Mammary epithelial cell (primary cell): ENCODE measurements at regions of chr20 and their contacts with region 1.

Region 1: DNA sequence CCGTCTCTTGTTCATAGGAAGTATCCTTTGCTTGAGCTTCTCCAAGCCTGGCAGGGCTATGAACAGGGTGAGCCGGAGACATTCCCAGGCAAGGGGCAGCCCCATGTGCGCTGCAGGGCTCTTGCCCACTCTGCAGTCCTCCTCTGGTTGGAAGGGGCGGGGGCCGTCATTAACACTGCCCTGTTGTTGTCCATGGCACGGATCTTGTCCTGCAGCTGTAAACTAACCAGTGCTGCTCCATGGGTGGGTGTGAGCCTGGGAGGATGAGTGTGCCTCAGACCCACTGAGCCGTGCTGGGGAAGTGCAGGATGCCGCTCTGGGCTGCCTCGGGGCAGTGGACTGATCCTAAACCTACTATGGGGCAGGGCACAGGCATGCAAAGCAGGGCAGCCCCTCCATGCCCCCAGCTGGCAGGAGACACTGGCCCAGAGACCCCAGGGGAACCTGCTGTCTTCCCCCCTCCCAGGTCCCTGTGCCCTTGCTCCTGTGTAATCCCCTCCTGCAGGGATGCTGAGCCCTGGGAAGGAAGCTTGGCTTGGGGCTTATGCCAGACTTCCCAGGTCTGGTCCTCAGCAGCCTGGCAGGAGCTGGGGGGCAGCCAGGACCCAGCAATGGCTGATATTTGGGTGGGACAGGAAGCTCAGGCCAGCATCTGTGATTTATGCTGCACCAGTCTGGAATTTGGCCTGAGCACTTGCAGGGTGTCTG is 8.5 kb downstream of the EBF4 start:
- DNase-seq: no peak
- H3K4me3 ChIP-seq: no peak overlapping the region
- H3K27ac ChIP-seq: no peak overlapping the region
- H3K4me1 ChIP-seq: no peaks in the 10 kb centered on the region
- H3K27me3 ChIP-seq: peaks cover 7% of the 10 kb centered on the region
- CTCF ChIP-seq: no peak

Region 2: GRCh38 chr20:2984956-2985661 is 284.0 kb after region 1 on chr20:
- CTCF ChIA-PET with region 1: no interaction called
- dilution Hi-C with region 1: loop called (anchors 5 kb)
- in situ Hi-C with region 1: no loop called
- intact Hi-C with region 1: no loop called
- DNase-seq: peak; percentile 71
- H3K4me3 ChIP-seq: no peak overlapping the region
- H3K27ac ChIP-seq: no peak overlapping the region
- H3K4me1 ChIP-seq: peaks cover 22% of the 10 kb centered on the region
- H3K27me3 ChIP-seq: no peaks in the 10 kb centered on the region
- CTCF ChIP-seq: no peak